WTC11 (cell line): ENCODE measurements at regions of chr4 and their contacts with region 1.

Region 1: GRCh38 chr4:138090150-138090917 is 151.8 kb downstream of the SLC7A11 start:
- DNase-seq: peak; percentile 46
- ATAC-seq: peak; percentile 83
- H3K4me3 Mint-ChIP-seq: peak overlapping the region; percentile 26; the same call in 1 of the 2 replicates
- H3K27ac Mint-ChIP-seq: no peak overlapping the region
- H3K4me1 Mint-ChIP-seq: peaks cover 8% of the 10 kb centered on the region
- H3K27me3 Mint-ChIP-seq: no peaks in the 10 kb centered on the region
- CTCF ChIP-seq: peak; percentile 70

Region 2: DNA sequence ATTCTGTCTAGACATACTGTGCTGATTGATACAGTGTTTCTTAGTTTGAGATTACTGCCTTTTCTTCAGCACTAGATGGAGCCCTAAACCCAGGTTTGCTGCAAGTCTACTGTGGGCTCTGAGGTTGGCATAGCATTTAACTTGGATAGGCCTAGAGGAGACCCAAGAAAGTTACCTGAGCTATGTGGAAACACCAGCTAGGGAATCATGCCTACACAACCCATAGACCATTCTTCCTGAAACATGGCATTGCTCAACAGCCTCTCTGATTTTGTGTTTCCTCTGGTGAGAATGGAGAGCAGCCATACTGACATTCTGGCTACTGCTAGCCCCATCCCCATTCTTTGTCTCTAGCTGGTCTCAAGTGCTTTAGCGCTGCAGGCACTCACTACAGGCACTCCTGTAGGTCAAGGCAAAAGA is 270.4 kb before region 1 on chr4:
- CTCF ChIA-PET with region 1: interaction called, 26 read pairs
- POLR2A ChIA-PET with region 1: no interaction called
- DNase-seq: peak; percentile 20
- ATAC-seq: peak; percentile 99
- H3K4me3 Mint-ChIP-seq: no peak overlapping the region
- H3K27ac Mint-ChIP-seq: no peak overlapping the region
- H3K4me1 Mint-ChIP-seq: peaks cover 3% of the 10 kb centered on the region; the same call in 1 of the 2 replicates
- H3K27me3 Mint-ChIP-seq: no peaks in the 10 kb centered on the region
- CTCF ChIP-seq: no peak

Region 3: DNA sequence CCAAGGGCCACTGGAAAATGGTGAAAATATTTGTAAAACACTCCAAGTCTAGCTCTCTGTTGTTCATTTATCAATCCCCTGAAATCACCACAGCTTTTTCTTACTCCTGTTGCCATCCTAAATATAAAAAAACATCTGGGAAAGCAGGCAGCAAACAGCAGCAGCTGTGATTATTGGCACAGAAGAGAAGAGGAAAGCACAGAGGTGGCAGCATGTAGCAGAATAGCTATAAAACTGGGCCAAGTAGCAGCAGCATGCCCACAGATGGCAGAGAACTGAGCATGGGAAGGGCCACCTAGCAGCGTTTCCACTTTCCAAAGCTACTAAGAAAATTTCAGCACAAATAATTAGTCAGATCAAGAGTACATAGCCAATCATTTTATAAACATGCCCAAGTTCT is 155.4 kb before region 1 on chr4:
- CTCF ChIA-PET with region 1: no interaction called
- POLR2A ChIA-PET with region 1: no interaction called
- DNase-seq: no peak
- ATAC-seq: no peak
- H3K4me3 Mint-ChIP-seq: no peak overlapping the region
- H3K27ac Mint-ChIP-seq: no peak overlapping the region
- H3K4me1 Mint-ChIP-seq: 0 out of 2 replicates have a peak, but pooled peaks cover 4% of the 10 kb centered on the region
- H3K27me3 Mint-ChIP-seq: no peaks in the 10 kb centered on the region
- CTCF ChIP-seq: no peak

Region 4: GRCh38 chr4:138035781-138036258 is 54.5 kb before region 1 on chr4:
- CTCF ChIA-PET with region 1: interaction called, 38 read pairs
- POLR2A ChIA-PET with region 1: no interaction called
- DNase-seq: no peak
- ATAC-seq: peak; percentile 97
- H3K4me3 Mint-ChIP-seq: no peak overlapping the region
- H3K27ac Mint-ChIP-seq: no peak overlapping the region
- H3K4me1 Mint-ChIP-seq: peaks cover 8% of the 10 kb centered on the region
- H3K27me3 Mint-ChIP-seq: no peaks in the 10 kb centered on the region
- CTCF ChIP-seq: peak; percentile 25; the same call in 1 of the 2 replicates

Region 5: GRCh38 chr4:138078751-138079520 is 11.4 kb before region 1 on chr4:
- CTCF ChIA-PET with region 1: interaction called, 14 read pairs
- POLR2A ChIA-PET with region 1: no interaction called
- DNase-seq: no peak
- ATAC-seq: no peak
- H3K4me3 Mint-ChIP-seq: no peak overlapping the region
- H3K27ac Mint-ChIP-seq: no peak overlapping the region
- H3K4me1 Mint-ChIP-seq: peaks cover 7% of the 10 kb centered on the region
- H3K27me3 Mint-ChIP-seq: no peaks in the 10 kb centered on the region
- CTCF ChIP-seq: no peak

Region 6: GRCh38 chr4:138111456-138112000 is 21.2 kb after region 1 on chr4:
- CTCF ChIA-PET with region 1: interaction called, 13 read pairs
- POLR2A ChIA-PET with region 1: no interaction called
- DNase-seq: peak; percentile 32
- ATAC-seq: peak; percentile 77
- H3K4me3 Mint-ChIP-seq: 0 out of 2 replicates have a peak overlapping the region, but pooled peaks have one; percentile 1
- H3K27ac Mint-ChIP-seq: peak overlapping the region; percentile 98
- H3K4me1 Mint-ChIP-seq: peaks cover 64% of the 10 kb centered on the region
- H3K27me3 Mint-ChIP-seq: no peaks in the 10 kb centered on the region
- CTCF ChIP-seq: no peak

Region 7: GRCh38 chr4:138182838-138183426 is 92.6 kb after region 1 on chr4:
- CTCF ChIA-PET with region 1: interaction called, 11 read pairs
- POLR2A ChIA-PET with region 1: no interaction called
- DNase-seq: no peak
- ATAC-seq: peak; percentile 43; the same call in 1 of the 2 replicates
- H3K4me3 Mint-ChIP-seq: no peak overlapping the region
- H3K27ac Mint-ChIP-seq: peak overlapping the region; percentile 64; the same call in 1 of the 2 replicates
- H3K4me1 Mint-ChIP-seq: peaks cover 30% of the 10 kb centered on the region
- H3K27me3 Mint-ChIP-seq: no peaks in the 10 kb centered on the region
- CTCF ChIP-seq: peak; percentile 45

Region 8: DNA sequence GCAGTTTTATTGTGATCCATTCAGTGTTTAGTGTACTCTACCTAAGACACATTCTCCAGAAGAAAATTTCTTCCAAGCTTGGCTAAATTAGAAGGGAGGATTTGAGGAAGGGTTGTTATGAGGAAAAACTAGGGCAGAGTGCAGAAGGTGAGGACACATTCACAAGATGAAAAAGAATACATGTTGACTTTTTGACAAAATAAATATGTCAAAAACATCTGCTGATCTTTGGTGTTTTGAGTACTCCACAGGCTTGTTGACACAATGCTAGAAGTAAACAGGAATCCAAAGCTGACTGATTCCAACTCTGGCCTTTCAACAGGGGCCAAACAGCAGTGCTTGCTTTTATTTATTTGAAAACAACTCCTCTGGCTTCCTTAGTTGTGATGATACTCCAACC is 277.6 kb after region 1 on chr4:
- CTCF ChIA-PET with region 1: no interaction called
- POLR2A ChIA-PET with region 1: no interaction called
- DNase-seq: no peak
- ATAC-seq: no peak
- H3K4me3 Mint-ChIP-seq: no peak overlapping the region
- H3K27ac Mint-ChIP-seq: no peak overlapping the region
- H3K4me1 Mint-ChIP-seq: 0 out of 2 replicates have a peak, but pooled peaks cover 7% of the 10 kb centered on the region
- H3K27me3 Mint-ChIP-seq: no peaks in the 10 kb centered on the region
- CTCF ChIP-seq: no peak